IMR-90 (cell line): ENCODE measurements at regions of chr12 and their contacts with region 1.

Region 1: DNA sequence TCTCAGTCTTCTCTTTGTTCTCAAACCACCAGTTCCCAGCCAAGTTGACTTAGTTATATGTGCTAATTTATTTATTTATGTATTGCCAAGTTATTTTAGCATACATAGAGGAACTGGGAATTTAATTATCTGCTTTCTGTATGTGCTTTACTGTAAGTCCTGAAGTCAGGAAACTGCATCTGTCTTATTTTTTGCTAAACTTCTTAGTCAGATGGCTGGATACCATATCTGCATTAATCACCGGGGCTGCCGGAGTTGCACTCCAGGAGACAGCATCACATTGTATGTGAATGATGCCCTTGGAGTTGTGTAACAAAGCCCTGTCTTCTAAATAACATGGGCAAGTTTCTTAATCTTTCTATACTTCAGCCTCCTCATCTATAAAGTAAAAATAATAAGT is 96.2 kb downstream of the MON2 start:
- DNase-seq: peak; percentile 61
- ATAC-seq: peak; percentile 67
- H3K4me3 ChIP-seq: no peak overlapping the region
- H3K27ac ChIP-seq: no peak overlapping the region
- H3K4me1 ChIP-seq: no peaks in the 10 kb centered on the region
- H3K27me3 ChIP-seq: no peaks in the 10 kb centered on the region
- CTCF ChIP-seq: no peak
- POLR2A ChIP-seq: no peak
- RAD21 ChIP-seq: no peak

Region 2: DNA sequence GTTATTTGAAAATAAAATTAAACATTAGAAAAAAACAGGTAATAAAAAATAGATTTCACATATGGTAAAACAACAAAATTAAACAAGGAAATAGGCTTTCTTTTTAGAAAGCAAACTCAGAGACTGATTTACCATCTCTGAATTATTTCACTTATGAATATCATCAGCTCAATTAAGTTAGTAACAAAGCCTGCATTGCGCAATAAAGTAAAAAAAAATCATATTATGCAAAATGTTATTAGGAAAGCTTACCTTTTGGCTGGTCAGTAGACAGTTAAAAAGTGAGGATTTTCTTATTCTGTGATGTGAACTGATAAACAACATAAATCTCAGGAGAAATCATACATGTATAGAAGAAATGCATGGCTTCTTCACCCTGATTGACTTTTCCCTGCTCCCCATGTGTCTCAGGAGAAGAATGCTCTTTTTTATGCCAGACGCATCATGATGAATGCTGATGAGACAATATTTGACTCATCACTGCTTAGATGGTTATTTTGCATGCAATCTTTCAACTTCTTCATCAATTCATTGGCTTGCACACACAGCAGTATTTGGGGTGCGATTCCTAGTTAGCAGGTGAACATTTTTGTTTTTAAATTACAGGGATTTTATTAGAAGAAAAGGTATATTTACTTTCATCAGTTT is 427.2 kb before region 1 on chr12:
- CTCF ChIA-PET with region 1: no interaction called
- POLR2A ChIA-PET with region 1: no interaction called
- dilution Hi-C with region 1: no loop called
- in situ Hi-C with region 1: no loop called
- intact Hi-C with region 1: no loop called
- DNase-seq: no peak
- ATAC-seq: no peak
- H3K4me3 ChIP-seq: no peak overlapping the region
- H3K27ac ChIP-seq: no peak overlapping the region
- H3K4me1 ChIP-seq: no peaks in the 10 kb centered on the region
- H3K27me3 ChIP-seq: no peaks in the 10 kb centered on the region
- CTCF ChIP-seq: no peak
- POLR2A ChIP-seq: no peak
- RAD21 ChIP-seq: no peak

Region 3: DNA sequence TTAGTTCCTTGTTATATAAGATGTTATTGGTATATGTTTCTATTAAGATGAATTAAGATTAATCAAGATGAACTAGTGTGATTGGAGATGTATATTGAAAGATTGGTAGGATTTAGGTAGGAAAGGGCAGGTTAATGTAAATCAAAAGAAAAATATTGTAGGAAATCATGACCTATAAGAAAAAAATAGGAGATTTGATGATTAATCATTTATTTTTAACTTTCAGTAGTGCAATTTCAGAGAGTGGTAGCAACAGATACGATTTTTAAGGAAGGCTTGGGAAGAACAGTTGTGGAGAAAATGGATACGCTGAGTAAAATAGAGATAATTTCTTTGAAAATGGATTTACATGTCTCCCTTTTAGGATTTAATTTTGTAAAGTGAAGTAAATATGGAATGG is 22.5 kb before region 1 on chr12:
- CTCF ChIA-PET with region 1: interaction called, 3 read pairs
- POLR2A ChIA-PET with region 1: no interaction called
- dilution Hi-C with region 1: no loop called
- in situ Hi-C with region 1: no loop called
- intact Hi-C with region 1: loop called (anchors 2 kb)
- DNase-seq: no peak
- ATAC-seq: no peak
- H3K4me3 ChIP-seq: no peak overlapping the region
- H3K27ac ChIP-seq: no peak overlapping the region
- H3K4me1 ChIP-seq: peaks cover 2% of the 10 kb centered on the region
- H3K27me3 ChIP-seq: no peaks in the 10 kb centered on the region
- CTCF ChIP-seq: no peak
- POLR2A ChIP-seq: no peak
- RAD21 ChIP-seq: no peak

Region 4: GRCh38 chr12:62588916-62589315 is 26.1 kb after region 1 on chr12:
- CTCF ChIA-PET with region 1: no interaction called
- POLR2A ChIA-PET with region 1: no interaction called
- dilution Hi-C with region 1: no loop called
- in situ Hi-C with region 1: no loop called
- intact Hi-C with region 1: no loop called
- DNase-seq: peak; percentile 45
- ATAC-seq: peak; percentile 65
- H3K4me3 ChIP-seq: no peak overlapping the region
- H3K27ac ChIP-seq: no peak overlapping the region
- H3K4me1 ChIP-seq: peaks cover 5% of the 10 kb centered on the region
- H3K27me3 ChIP-seq: no peaks in the 10 kb centered on the region
- CTCF ChIP-seq: no peak
- POLR2A ChIP-seq: no peak
- RAD21 ChIP-seq: no peak